Calu3 (cell line): ENCODE measurements at regions of chr16 and their contacts with region 1.

Region 1: DNA sequence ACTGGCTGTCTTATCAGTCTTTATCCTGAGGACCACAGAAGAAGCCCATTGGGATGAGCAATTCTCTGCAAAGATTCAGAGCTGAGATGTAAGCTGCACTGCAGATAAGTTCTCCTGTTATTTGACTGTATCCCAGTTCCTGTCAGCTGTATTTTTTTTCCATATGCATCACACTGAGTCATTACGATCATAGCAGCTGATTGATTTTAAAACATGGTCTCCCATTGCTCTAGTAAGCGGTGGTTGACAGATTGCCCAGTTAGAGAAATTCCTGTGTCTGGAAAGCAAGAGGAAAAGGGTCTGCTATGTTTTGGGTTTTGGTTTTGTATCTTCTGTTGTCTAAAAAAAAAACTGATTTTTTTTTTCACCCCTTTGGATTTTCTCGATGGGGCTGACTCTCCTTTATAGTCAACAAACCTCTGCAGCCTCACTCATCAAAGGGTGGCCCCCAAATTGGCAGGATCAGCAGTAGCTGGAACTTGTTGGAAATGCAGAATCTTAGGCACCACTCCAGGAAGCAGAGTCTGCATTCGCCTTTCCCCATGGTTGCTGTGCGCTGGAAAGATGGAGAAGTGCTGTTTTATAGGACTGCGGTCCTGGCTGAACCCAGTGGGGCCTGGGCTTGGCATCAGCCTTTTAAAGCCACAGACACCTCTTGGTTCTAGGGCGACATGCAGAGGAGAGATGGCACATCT is 220.1 kb upstream of the MPHOSPH6 start:
- DNase-seq: no peak
- H3K4me3 Mint-ChIP-seq: no peak overlapping the region
- H3K27ac Mint-ChIP-seq: no peak overlapping the region
- H3K4me1 Mint-ChIP-seq: no peaks in the 10 kb centered on the region
- H3K27me3 Mint-ChIP-seq: peaks cover 31% of the 10 kb centered on the region
- CTCF ChIP-seq: no peak

Region 2: DNA sequence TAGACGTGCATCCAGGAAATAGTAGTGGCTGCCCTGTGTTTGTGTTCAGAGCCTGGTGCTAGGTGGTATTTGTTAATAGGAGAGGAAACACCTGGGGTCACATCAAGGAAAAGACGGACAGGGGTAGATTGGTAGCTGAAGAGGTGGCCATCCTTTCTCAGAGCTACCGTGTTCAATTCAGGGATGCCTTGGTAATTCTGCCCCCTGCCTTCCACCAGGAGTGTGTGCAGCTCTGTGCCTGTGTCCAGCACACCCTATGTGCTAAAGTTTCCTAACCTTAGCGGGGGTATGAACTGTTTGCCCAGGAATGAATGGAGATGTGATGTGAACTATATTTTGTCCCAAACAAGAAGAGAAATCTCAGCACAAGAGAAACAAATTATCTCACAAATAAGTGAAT is 45.9 kb before region 1 on chr16:
- CTCF ChIA-PET with region 1: no interaction called
- intact Hi-C with region 1: no loop called
- DNase-seq: peak; percentile 9
- H3K4me3 Mint-ChIP-seq: no peak overlapping the region
- H3K27ac Mint-ChIP-seq: no peak overlapping the region
- H3K4me1 Mint-ChIP-seq: no peaks in the 10 kb centered on the region
- H3K27me3 Mint-ChIP-seq: peaks cover 25% of the 10 kb centered on the region
- CTCF ChIP-seq: no peak

Region 3: DNA sequence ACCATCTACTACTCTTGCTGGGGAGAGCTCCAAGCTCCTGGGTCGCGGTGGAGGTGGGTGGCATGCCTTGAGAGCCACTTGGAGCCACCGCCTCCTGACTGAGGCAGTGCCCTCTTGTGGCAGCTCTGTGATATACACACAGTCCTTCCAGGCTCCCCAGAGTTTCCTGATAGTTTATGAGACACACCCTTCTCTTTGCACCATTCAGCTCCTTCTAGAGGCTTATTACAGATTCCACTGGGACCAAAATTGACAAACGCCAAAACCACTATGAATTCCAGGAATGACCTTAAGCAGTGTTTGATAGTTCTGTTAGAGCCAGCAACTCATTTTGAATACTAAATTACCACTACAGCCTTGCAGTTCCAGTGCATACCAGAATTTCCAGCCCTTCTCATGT is 66.6 kb after region 1 on chr16:
- CTCF ChIA-PET with region 1: no interaction called
- intact Hi-C with region 1: loop called (anchors 10 kb)
- DNase-seq: peak; percentile 71
- H3K4me3 Mint-ChIP-seq: no peak overlapping the region
- H3K27ac Mint-ChIP-seq: no peak overlapping the region
- H3K4me1 Mint-ChIP-seq: no peaks in the 10 kb centered on the region
- H3K27me3 Mint-ChIP-seq: peaks cover 25% of the 10 kb centered on the region
- CTCF ChIP-seq: peak; percentile 63

Region 4: GRCh38 chr16:82497139-82497538 is 107.0 kb after region 1 on chr16:
- CTCF ChIA-PET with region 1: no interaction called
- intact Hi-C with region 1: no loop called
- DNase-seq: no peak
- H3K4me3 Mint-ChIP-seq: no peak overlapping the region
- H3K27ac Mint-ChIP-seq: no peak overlapping the region
- H3K4me1 Mint-ChIP-seq: no peaks in the 10 kb centered on the region
- H3K27me3 Mint-ChIP-seq: no peaks in the 10 kb centered on the region
- CTCF ChIP-seq: no peak